ENCODE measurements at regions of chr10 and their contacts with region 1.

Region 1: GRCh38 chr10:102485093-102485784 is 17.3 kb downstream of the ACTR1A start:
- DNase-seq: no peak
- H3K4me3 ChIP-seq: no peak overlapping the region
- H3K27ac ChIP-seq: no peak overlapping the region
- H3K4me1 ChIP-seq: no peaks in the 10 kb centered on the region
- H3K27me3 ChIP-seq: no peaks in the 10 kb centered on the region
- CTCF ChIP-seq: no peak
- POLR2A ChIP-seq: no peak

Region 2: GRCh38 chr10:102393246-102394078 is 91.8 kb before region 1 on chr10:
- intact Hi-C with region 1: loop called (anchors 2 kb)
- DNase-seq: peak in 1 of 2 donors; percentile 80
- H3K4me3 ChIP-seq: peak overlapping the region; percentile 63 to 82 (median 73)
- H3K27ac ChIP-seq: peak overlapping the region; percentile 96 to 97
- H3K4me1 ChIP-seq: peaks cover 0 to 11% of the 10 kb centered on the region in 2 donors
- H3K27me3 ChIP-seq: no peaks in the 10 kb centered on the region
- CTCF ChIP-seq: no peak
- POLR2A ChIP-seq: no peak

Measured in breast epithelium (tissue), 4 donors.